CD14-positive monocyte (primary cell): ENCODE measurements at regions of chr13 and their contacts with region 1.

Region 1: DNA sequence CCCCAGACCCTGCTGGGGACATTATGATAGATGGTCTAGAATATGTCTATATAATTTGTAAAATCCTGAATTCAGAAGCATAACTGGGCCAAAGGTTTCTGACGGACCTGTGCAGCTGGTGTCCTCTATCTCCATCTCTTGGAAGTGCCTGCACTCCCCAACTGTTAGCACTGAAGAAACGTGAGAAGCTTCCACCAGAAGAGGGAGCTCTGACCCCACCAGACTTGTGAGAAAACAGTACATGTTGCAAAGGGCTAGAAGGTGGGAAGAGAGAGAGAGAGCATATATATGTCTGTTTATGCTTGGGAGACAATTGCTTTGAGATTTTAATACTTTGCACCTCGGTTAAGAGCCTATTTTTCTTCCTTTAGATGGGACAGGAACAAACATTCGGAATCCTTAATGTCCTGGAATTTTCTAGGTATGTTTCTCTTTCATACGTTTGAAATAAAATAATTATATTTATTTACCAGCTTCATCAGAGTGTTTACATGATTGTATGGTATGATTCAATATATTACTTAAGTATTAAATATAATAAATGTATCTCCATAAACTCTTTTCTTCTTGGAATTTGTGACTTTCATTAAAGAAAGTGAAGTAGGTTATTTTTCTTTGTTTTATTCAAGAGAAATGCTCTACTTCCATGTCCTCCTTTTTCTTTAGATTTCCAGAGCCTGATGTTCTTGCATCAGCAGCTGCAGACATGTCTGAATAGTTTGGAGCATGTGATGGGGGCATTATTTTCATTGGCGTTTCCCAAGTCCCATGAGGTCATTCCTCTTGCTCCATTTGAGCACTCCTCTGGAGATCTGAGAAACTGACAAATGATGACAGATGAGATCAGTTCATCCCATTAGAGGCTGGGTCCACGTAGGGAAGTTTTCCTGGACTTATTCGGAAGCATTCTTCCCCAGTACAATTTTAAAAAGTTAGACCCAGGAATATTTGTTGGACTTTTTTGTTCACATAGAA is 202.9 kb downstream of the ATP8A2 start:
- DNase-seq: peak in 2 of 3 donors; percentile 6 to 29
- H3K4me3 ChIP-seq: no peak overlapping the region
- H3K4me3 Mint-ChIP-seq: no peak overlapping the region
- H3K27ac ChIP-seq: no peak overlapping the region
- H3K27ac Mint-ChIP-seq: no peak overlapping the region
- H3K4me1 ChIP-seq: no peaks in the 10 kb centered on the region
- H3K4me1 Mint-ChIP-seq: no peaks in the 10 kb centered on the region
- H3K27me3 ChIP-seq: no peaks in the 10 kb centered on the region
- H3K27me3 Mint-ChIP-seq: peaks cover 7 to 18% (median 9%) of the 10 kb centered on the region in 3 donors
- CTCF ChIP-seq: peak; percentile 65

Region 2: DNA sequence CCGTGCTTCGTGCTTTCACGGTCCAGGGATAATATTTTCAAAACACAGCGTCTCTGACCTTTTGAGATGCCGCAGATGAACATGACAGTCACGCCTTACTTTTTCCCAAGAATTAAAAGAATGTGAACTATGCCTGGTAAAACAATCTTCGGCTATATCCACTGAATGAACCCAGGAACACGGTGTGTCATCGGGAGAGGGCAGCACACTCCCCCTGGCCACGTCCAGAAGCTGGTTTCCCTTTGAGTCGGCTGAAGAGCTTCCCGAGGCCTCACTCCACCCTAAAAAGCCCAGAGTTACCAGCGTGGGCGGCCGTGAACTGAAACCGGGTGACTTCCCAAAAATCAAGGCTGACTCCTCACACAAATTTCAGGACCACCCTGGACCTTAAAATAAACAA is 500.0 kb after region 1 on chr13:
- intact Hi-C with region 1: loop called (anchors 2 to 5 kb)
- DNase-seq: no peak
- H3K4me3 ChIP-seq: no peak overlapping the region
- H3K4me3 Mint-ChIP-seq: no peak overlapping the region
- H3K27ac ChIP-seq: no peak overlapping the region
- H3K27ac Mint-ChIP-seq: no peak overlapping the region
- H3K4me1 ChIP-seq: no peaks in the 10 kb centered on the region
- H3K4me1 Mint-ChIP-seq: no peaks in the 10 kb centered on the region
- H3K27me3 ChIP-seq: peaks cover 3 to 6% of the 10 kb centered on the region in 2 donors
- H3K27me3 Mint-ChIP-seq: peaks cover 18 to 34% (median 28%) of the 10 kb centered on the region in 3 donors
- CTCF ChIP-seq: no peak